Right ventricle myocardium superior (tissue), 1 donor: ENCODE measurements at regions of chr5 and their contacts with region 1.

Region 1: DNA sequence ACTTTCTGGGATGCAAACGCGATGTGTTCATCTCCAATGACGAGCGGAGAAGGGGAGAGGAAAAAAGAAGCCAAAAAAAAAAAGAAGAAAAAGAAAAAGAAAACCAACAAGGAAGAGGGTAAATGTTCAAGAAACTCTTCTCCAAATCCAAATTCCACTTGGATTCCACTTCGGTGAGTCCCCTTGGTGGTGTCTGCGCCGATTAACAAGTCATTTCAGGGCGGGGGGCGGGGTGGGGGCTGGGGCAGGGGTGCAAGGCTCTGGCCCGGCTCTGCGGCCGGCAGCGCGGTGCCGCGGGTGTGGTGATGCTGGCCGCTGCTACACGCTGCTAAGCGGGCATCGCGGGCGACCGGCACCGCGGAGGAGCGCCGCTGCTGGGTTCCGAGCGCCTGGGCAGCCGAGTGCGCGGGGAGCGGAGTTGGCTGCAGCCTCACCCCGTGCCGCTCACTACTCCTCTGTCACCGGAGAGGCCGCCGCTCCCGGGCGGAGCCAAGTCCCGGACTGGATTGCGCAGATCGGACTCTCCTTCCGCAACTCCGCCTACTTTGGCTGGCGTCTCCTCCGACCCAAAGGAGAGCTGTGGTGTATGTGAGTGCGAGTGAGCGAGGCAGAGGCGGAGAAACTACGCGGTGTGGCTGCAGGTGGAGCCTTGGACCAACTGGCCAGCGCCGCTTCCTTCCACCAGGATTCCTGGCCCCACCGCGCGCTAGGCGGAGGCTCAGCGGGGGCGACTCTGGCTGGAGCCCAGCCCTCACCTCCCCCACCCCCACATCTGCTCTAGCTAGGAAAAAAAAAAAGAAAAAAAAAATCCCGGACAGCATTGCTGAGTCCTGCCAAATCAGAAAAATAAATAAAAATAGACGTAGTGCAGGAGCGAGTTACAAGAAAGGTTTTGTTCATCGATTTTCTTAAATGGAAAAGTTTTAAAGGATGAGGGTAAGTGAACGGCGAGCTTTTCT is at the start of gene SEMA6A:
- DNase-seq: peak; percentile 94
- ATAC-seq: peak; percentile 93
- total RNA-seq, gene SEMA6A: 6.3 TPM

Region 2: GRCh38 chr5:116308391-116308790 is 266.3 kb before region 1 on chr5:
- intact Hi-C with region 1: no loop called
- DNase-seq: no peak
- ATAC-seq: no peak

Region 3: GRCh38 chr5:116788851-116789403 is 214.3 kb after region 1 on chr5:
- intact Hi-C with region 1: loop called (anchors 10 kb)
- DNase-seq: no peak
- ATAC-seq: peak; percentile 60

Region 4: GRCh38 chr5:116947691-116948528 is 373.3 kb after region 1 on chr5:
- intact Hi-C with region 1: loop called (anchors 5 kb)
- DNase-seq: peak; percentile 71
- ATAC-seq: peak; percentile 93